ENCODE measurements at regions of chr20 and their contacts with region 1.

Region 1: GRCh38 chr20:41738604-41739206 is 120.5 kb upstream of the CHD6 start:
- DNase-seq: peak; percentile 39
- CTCF ChIP-seq: peak; percentile 76

Region 2: GRCh38 chr20:41686961-41687360 is 51.7 kb before region 1 on chr20:
- CTCF ChIA-PET with region 1: no interaction called
- POLR2A ChIA-PET with region 1: no interaction called
- DNase-seq: no peak
- CTCF ChIP-seq: no peak

Region 3: DNA sequence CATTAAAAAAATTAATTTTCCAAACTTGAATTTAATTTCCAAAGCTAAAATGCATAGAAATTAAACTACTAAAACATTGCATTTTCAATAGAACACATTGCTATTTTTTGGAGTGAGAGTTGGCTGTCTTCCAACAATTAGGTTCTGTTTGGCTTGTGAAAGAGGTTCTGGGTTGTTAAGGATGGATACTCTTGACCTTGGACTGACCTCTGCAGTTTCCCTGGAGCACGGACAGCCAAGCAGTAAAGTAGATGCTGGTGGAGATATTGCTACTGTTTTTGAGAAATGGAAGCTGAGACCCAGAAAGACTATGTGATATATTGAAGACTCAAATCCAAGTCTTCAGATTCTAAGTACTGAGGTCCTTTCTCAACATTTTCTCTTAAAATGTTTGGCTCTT is 24.7 kb before region 1 on chr20:
- CTCF ChIA-PET with region 1: interaction called, 10 read pairs
- POLR2A ChIA-PET with region 1: no interaction called
- DNase-seq: no peak
- CTCF ChIP-seq: no peak

Region 4: GRCh38 chr20:41726727-41727126 is 12.0 kb before region 1 on chr20:
- CTCF ChIA-PET with region 1: interaction called, 10 read pairs
- POLR2A ChIA-PET with region 1: no interaction called
- DNase-seq: no peak
- CTCF ChIP-seq: no peak

Region 5: DNA sequence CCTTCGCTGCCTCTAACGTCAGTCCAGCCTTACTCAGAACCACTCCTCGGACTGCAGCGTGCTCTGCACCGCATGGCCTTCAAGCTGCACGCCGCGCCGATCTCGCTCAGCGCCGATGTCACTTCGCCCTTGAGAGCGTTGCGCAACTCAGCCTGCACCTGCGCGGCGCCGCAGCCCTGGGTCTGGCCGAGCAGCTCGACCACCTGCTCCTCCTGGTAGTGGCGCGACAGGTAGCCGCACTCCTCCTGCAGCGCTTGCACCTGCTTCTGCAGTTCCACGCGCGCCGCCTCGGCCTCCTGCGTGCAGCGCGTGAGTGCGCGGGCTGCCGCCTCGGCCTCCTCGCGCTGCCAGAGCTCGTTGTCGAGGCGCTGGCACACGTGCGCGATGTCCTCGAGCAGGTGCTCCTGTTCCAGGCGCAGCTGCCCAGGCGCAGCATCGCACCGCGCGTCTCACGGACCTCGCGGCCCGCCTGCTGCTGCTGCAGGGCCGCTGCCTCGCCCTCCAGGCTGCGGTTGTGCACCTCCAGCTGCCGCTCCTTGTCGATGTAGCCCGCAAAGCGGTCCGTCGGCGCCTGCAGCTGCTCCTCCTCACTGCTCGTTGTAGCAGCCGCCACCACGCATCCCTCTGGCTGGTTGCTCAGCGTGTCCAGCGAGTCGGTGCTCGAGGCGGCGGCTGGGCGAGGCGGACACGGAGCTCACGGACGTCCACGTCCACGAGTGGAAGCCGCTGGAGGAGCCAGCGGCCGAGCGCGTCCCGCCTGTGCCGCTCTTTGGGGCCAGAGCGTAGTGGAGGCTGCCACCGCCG is 260.0 kb after region 1 on chr20:
- CTCF ChIA-PET with region 1: no interaction called
- POLR2A ChIA-PET with region 1: no interaction called
- DNase-seq: no peak
- CTCF ChIP-seq: no peak

Region 6: GRCh38 chr20:42082611-42083010 is 343.9 kb after region 1 on chr20:
- CTCF ChIA-PET with region 1: no interaction called
- POLR2A ChIA-PET with region 1: no interaction called
- DNase-seq: no peak
- CTCF ChIP-seq: no peak

Region 7: GRCh38 chr20:42530822-42531448 is 792.2 kb after region 1 on chr20:
- CTCF ChIA-PET with region 1: interaction called, 16 read pairs
- POLR2A ChIA-PET with region 1: no interaction called
- DNase-seq: peak; percentile 49
- CTCF ChIP-seq: peak; percentile 36

Region 8: GRCh38 chr20:43187476-43188233 is 1449.0 kb after region 1 on chr20:
- CTCF ChIA-PET with region 1: interaction called, 17 read pairs
- POLR2A ChIA-PET with region 1: no interaction called
- DNase-seq: peak; percentile 77
- CTCF ChIP-seq: peak; percentile 92

Measured in GM10248 (cell line).